ENCODE measurements at regions of chr9 and their contacts with region 1.

Region 1: GRCh38 chr9:20622330-20623020 is at the start of gene MLLT3:
- DNase-seq: peak; percentile 90 to 95
- ATAC-seq: peak; percentile 78
- H3K4me3 ChIP-seq: peak within 1 kb of the TSS; percentile 91 to 99 (median 96)
- H3K27ac ChIP-seq: peak within 1 kb of the TSS; percentile 85 to 98 (median 92)
- H3K4me1 ChIP-seq: peaks cover 12 to 14% of the 10 kb centered on the region in 2 donors
- H3K27me3 ChIP-seq: no peaks in the 10 kb centered on the region
- CTCF ChIP-seq: peak in 1 of 5 experiments; percentile 23
- POLR2A ChIP-seq: peak; percentile 57 to 79
- total RNA-seq, gene MLLT3: 4.0 to 6.4 (median 4.5) TPM

Region 2: GRCh38 chr9:20356403-20357035 is 266.0 kb before region 1 on chr9:
- in situ Hi-C with region 1: loop called in 3 of 4 experiments (anchors 10 to 25 kb)
- intact Hi-C with region 1: loop called (anchors 1 kb)
- DNase-seq: peak; percentile 30 to 50
- ATAC-seq: peak; percentile 78 to 81
- H3K4me3 ChIP-seq: peak overlapping the region; percentile 1 to 52 (median 27)
- H3K27ac ChIP-seq: peak overlapping the region; percentile 32 to 60 (median 38)
- H3K4me1 ChIP-seq: peaks cover 27 to 49% of the 10 kb centered on the region in 2 donors
- H3K27me3 ChIP-seq: no peaks in the 10 kb centered on the region
- CTCF ChIP-seq: peak; percentile 17 to 72 (median 40)
- POLR2A ChIP-seq: no peak

Region 3: GRCh38 chr9:20604562-20604961 is 17.9 kb before region 1 on chr9:
- in situ Hi-C with region 1: no loop called
- intact Hi-C with region 1: loop called (anchors 2 kb)
- DNase-seq: no peak
- ATAC-seq: peak; percentile 58 to 69
- H3K4me3 ChIP-seq: peak overlapping the region; percentile 27 to 40 (median 34)
- H3K27ac ChIP-seq: peak overlapping the region in 3 of 4 donors; percentile 17 to 27 (median 24)
- H3K4me1 ChIP-seq: peaks cover 34% of the 10 kb centered on the region in 2 donors
- H3K27me3 ChIP-seq: no peaks in the 10 kb centered on the region
- CTCF ChIP-seq: no peak
- POLR2A ChIP-seq: no peak

Region 4: DNA sequence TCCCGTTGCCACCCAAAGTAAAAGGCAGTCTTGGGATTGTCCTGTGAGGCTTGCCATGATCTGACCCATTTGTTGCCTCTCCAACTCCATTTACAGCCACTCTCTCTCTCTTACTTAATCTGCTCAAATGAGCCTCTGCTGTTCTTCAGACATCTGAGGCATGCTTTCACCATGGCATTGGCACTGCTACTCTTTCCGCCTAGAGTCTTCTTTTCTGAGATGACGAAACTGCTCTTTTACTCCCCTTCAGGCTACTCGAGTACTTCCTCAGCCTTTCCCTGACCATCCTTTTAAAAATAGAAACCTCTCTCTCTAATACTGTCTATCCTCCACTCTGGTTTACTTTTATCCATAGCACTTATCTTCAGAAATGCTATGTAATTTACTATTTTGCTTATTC is 70.6 kb after region 1 on chr9:
- in situ Hi-C with region 1: loop called in 3 of 4 experiments (anchors 5 to 10 kb)
- intact Hi-C with region 1: no loop called
- DNase-seq: peak; percentile 11 to 67
- ATAC-seq: peak; percentile 98 to 99
- H3K4me3 ChIP-seq: no peak overlapping the region
- H3K27ac ChIP-seq: peak overlapping the region; percentile 56 to 63 (median 60)
- H3K4me1 ChIP-seq: peaks cover 13 to 14% of the 10 kb centered on the region in 2 donors
- H3K27me3 ChIP-seq: no peaks in the 10 kb centered on the region
- CTCF ChIP-seq: no peak
- POLR2A ChIP-seq: no peak

Region 5: GRCh38 chr9:20941174-20941690 is 318.8 kb after region 1 on chr9:
- in situ Hi-C with region 1: loop called in 2 of 4 experiments (anchors 5 to 10 kb)
- intact Hi-C with region 1: loop called (anchors 1 kb)
- DNase-seq: peak; percentile 14 to 18
- ATAC-seq: peak; percentile 87 to 93
- H3K4me3 ChIP-seq: no peak overlapping the region
- H3K27ac ChIP-seq: no peak overlapping the region
- H3K4me1 ChIP-seq: no peaks in the 10 kb centered on the region
- H3K27me3 ChIP-seq: no peaks in the 10 kb centered on the region
- CTCF ChIP-seq: peak; percentile 62 to 87 (median 72)
- POLR2A ChIP-seq: no peak

Measured in gastrocnemius medialis (tissue), 4 donors.